Activated B cell treated with CpG ODN at 0.5 μM for 24 hours (primary cell): ENCODE measurements at regions of chr3 and their contacts with region 1.

Region 1: GRCh38 chr3:51941798-51942602 is at the starts of genes PARP3 and RRP9:
- DNase-seq: peak; percentile 96
- ATAC-seq: peak; percentile 94
- H3K4me3 Mint-ChIP-seq: peak within 1 kb of the TSS; percentile 90
- H3K27ac Mint-ChIP-seq: peak within 1 kb of the TSS; percentile 77
- H3K4me1 Mint-ChIP-seq: peaks cover 38% of the 10 kb centered on the region
- H3K27me3 Mint-ChIP-seq: no peaks in the 10 kb centered on the region
- CTCF ChIP-seq: peak; percentile 34
- total RNA-seq, gene PARP3: 9.7 and 12.7 TPM in 2 replicates
- total RNA-seq, gene RRP9: 30.7 and 32.4 TPM in 2 replicates

Region 2: GRCh38 chr3:51670823-51671733 is 270.9 kb before region 1 on chr3 and contains the start of gene TEX264:
- CTCF ChIA-PET with region 1: no interaction called
- POLR2A ChIA-PET with region 1: no interaction called
- intact Hi-C with region 1: loop called (anchors 1 kb)
- DNase-seq: peak; percentile 95
- ATAC-seq: peak; percentile 85
- H3K4me3 Mint-ChIP-seq: peak within 1 kb of the TSS; percentile 89
- H3K27ac Mint-ChIP-seq: peak within 1 kb of the TSS; percentile 89
- H3K4me1 Mint-ChIP-seq: peaks cover 55% of the 10 kb centered on the region
- H3K27me3 Mint-ChIP-seq: no peaks in the 10 kb centered on the region
- CTCF ChIP-seq: no peak
- total RNA-seq, gene TEX264: 24.1 and 24.4 TPM in 2 replicates

Region 3: GRCh38 chr3:51974963-51975851 is 33.2 kb after region 1 on chr3 and contains the start of gene ABHD14A:
- CTCF ChIA-PET with region 1: interaction called, 27 read pairs
- POLR2A ChIA-PET with region 1: interaction called, 35 read pairs
- intact Hi-C with region 1: loop called (anchors 1 kb)
- DNase-seq: peak; percentile 74
- ATAC-seq: peak; percentile 76
- H3K4me3 Mint-ChIP-seq: peak within 1 kb of the TSS; percentile 98
- H3K27ac Mint-ChIP-seq: peak within 1 kb of the TSS; percentile 91
- H3K4me1 Mint-ChIP-seq: peaks cover 28% of the 10 kb centered on the region
- H3K27me3 Mint-ChIP-seq: no peaks in the 10 kb centered on the region
- CTCF ChIP-seq: no peak
- total RNA-seq, gene ABHD14A: 5.1 and 5.2 TPM in 2 replicates

Region 4: GRCh38 chr3:51995346-51996163 is 53.6 kb after region 1 on chr3 and contains the start of gene RPL29:
- CTCF ChIA-PET with region 1: interaction called, 4 read pairs
- POLR2A ChIA-PET with region 1: interaction called, 20 read pairs
- intact Hi-C with region 1: loop called (anchors 1 kb)
- DNase-seq: peak; percentile 84
- ATAC-seq: peak; percentile 98
- H3K4me3 Mint-ChIP-seq: peak within 1 kb of the TSS; percentile 100
- H3K27ac Mint-ChIP-seq: peak within 1 kb of the TSS; percentile 100
- H3K4me1 Mint-ChIP-seq: peaks cover 37% of the 10 kb centered on the region
- H3K27me3 Mint-ChIP-seq: no peaks in the 10 kb centered on the region
- CTCF ChIP-seq: no peak
- total RNA-seq, gene RPL29: 1,884 and 2,140 TPM in 2 replicates

Region 5: DNA sequence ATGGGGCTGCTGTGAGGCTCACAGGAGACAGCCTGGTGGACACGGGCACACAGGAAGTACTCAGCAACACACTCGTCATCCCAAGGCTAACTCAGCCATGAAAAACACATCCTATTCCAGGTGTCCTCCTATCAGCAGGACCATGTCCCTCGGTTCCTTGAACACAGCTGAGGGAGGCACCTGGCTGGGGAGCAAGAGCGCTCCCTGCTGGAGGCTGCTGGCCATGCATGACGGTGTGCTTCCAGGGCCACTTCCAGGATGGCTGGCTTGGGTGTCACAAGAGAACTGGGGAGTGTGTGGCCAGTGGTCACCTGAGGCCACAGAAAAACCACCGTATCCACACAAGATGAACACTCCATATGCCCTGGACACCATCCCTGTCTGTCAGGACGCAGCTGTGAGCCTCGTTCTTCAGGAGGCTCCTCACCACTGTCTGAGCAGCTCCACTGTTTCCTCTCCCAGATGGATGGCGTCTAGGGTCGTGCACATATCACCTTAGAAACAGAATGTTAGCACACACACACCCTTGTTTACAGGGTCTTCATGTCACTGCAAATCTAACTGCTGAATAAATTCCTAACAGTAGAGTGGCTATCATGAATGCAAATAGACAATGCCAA is 181.2 kb after region 1 on chr3:
- CTCF ChIA-PET with region 1: interaction called, 3 read pairs
- POLR2A ChIA-PET with region 1: interaction called, 4 read pairs
- intact Hi-C with region 1: loop called (anchors 2 kb)
- DNase-seq: peak; percentile 60
- ATAC-seq: peak; percentile 74
- H3K4me3 Mint-ChIP-seq: no peak overlapping the region
- H3K27ac Mint-ChIP-seq: peak overlapping the region; percentile 82
- H3K4me1 Mint-ChIP-seq: peaks cover 34% of the 10 kb centered on the region
- H3K27me3 Mint-ChIP-seq: no peaks in the 10 kb centered on the region
- CTCF ChIP-seq: no peak

Region 6: DNA sequence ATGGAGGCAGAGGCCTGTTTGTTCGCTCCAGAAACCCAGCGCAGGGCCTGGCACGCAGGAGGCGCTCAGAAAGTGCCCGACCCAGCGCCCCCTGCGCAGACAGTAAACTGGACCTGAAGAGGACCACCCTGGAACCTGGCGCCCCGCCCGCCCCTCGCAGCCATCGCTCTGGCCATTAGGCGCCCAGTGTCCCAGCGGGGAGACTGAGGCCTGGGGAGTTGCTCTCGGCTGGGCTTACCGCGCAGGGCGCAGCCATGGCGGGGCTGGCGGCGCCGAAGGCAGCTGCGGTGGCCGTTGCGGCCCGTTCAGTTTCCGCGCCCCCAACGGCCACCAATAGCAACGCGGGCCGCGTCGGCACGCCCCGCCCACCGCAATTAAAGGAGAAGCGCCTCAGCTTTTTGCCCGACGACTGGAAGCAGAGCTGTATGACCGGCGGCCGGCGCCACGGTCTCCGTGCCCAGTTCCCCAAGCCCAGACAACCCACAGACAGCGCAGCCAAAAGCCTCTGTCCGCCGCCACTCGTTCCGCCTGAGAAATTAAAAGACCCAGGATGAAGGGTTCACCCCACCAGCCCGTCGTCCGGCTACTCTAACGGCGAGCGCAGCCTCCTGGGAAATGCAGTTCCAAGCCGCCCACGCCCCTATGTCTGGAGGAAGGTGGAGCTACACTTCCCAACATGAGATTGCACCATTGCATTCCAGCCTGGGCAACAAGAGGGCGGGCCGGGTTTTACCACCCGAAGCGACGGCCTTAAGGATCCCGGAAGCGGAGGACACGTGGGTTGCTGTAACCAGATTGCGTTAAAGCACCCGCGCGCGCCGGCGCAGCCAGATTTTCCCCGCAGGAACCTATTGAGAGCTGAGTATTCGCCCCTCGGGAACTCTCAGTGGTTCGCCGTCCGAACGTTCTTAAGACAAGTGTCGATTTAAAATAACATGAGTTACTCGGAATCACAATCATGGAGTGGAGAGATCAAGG is 212.4 kb after region 1 on chr3 and contains the start of gene POC1A:
- CTCF ChIA-PET with region 1: no interaction called
- POLR2A ChIA-PET with region 1: interaction called, 4 read pairs
- intact Hi-C with region 1: loop called (anchors 1 kb)
- DNase-seq: peak; percentile 84
- ATAC-seq: peak; percentile 87
- H3K4me3 Mint-ChIP-seq: peak within 1 kb of the TSS; percentile 96
- H3K27ac Mint-ChIP-seq: peak within 1 kb of the TSS; percentile 97
- H3K4me1 Mint-ChIP-seq: peaks cover 13% of the 10 kb centered on the region
- H3K27me3 Mint-ChIP-seq: no peaks in the 10 kb centered on the region
- CTCF ChIP-seq: no peak
- total RNA-seq, gene POC1A: 2.3 and 2.4 TPM in 2 replicates